ENCODE measurements at regions of chr14 and their contacts with region 1.

Region 1: DNA sequence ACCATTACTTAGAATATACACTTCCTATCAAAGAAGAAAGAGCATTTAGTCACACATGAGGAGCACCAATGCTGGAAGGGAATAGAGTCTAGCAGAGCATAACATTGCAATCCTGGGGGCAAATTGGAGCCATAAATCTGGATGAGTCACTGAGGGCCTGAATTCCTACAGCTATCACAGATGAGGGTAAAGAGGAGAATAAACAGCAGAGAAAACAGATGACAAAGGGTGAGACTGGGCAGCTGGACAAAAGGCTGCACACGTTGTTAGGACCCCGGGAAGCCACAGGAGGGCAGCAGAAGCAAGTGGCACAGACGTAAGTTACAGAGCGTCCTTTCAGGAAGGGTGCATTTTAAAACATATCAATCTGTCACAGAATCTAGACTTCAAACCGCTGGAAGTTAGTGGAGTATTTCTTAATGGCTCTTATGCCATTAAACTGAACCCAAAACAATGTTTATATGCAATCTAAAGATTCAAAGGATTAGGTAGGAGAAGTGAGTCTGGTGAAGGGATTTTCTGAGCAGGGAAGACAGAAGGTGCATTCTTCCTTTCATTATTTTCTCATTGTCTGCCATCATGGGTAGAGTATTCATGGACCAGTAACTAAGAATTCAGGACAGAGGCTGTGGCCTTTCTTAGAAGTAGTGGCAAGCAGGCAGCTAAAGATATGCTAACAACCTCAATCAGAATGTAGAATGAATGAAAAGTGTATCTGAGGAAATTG is 159.8 kb upstream of the DAAM1 start:
- DNase-seq: peak; percentile 38 to 64
- ATAC-seq: peak; percentile 68 to 89 (median 76)
- H3K4me3 ChIP-seq: no peak overlapping the region
- H3K27ac ChIP-seq: no peak overlapping the region
- H3K4me1 ChIP-seq: no peaks in the 10 kb centered on the region
- H3K27me3 ChIP-seq: no peaks in the 10 kb centered on the region
- CTCF ChIP-seq: peak; percentile 76

Region 2: DNA sequence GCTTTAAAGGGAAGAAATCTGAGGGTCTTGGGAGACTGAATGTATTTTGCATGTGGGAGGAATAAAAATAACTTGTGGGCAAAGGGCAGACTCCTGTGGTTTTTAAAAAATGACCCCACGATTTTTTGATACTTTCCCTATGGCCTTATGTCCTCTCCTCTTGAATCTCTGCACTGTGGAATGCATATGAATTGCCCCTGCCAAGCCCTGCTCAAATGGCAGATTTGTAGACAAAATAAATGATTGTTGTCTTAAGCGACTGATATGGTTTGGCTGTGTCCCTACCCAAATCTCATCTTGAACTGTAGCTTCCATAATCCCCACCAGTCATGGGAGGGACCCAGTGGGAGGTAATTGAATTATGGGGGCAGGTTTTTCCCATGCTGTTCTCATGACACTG is 167.1 kb before region 1 on chr14:
- intact Hi-C with region 1: no loop called
- DNase-seq: no peak
- ATAC-seq: no peak
- H3K4me3 ChIP-seq: no peak overlapping the region
- H3K27ac ChIP-seq: no peak overlapping the region
- H3K4me1 ChIP-seq: no peaks in the 10 kb centered on the region
- H3K27me3 ChIP-seq: no peaks in the 10 kb centered on the region
- CTCF ChIP-seq: no peak

Region 3: GRCh38 chr14:59126710-59127432 is 98.2 kb after region 1 on chr14:
- intact Hi-C with region 1: loop called (anchors 1 to 5 kb)
- DNase-seq: no peak
- ATAC-seq: peak; percentile 71 to 93 (median 86)
- H3K4me3 ChIP-seq: no peak overlapping the region
- H3K27ac ChIP-seq: no peak overlapping the region
- H3K4me1 ChIP-seq: no peaks in the 10 kb centered on the region
- H3K27me3 ChIP-seq: no peaks in the 10 kb centered on the region
- CTCF ChIP-seq: peak; percentile 85

Region 4: GRCh38 chr14:59438195-59438647 is 409.6 kb after region 1 on chr14:
- intact Hi-C with region 1: loop called in 1 of 2 experiments (anchors 10 kb)
- DNase-seq: no peak
- ATAC-seq: no peak
- H3K4me3 ChIP-seq: no peak overlapping the region
- H3K27ac ChIP-seq: no peak overlapping the region
- H3K4me1 ChIP-seq: peaks cover 11% of the 10 kb centered on the region
- H3K27me3 ChIP-seq: no peaks in the 10 kb centered on the region
- CTCF ChIP-seq: no peak

Region 5: DNA sequence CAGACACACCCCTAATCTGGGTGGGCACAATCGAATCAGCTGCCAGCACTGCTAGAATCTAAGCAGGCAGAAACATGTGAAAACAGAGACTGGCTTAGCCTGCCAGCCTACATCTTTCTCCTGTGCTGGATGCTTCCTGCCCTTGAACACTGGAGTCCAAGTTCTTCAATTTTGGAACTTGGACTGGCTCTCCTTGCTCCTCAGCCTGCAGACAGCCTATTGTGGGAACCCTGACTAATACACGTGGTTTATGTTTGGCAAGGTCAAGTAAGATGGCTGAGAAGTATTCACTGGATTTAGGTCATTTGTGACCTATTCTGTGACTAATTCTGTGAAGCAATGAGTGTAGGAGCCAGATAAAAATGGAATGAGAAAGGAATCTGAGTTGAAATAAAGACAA is 425.5 kb after region 1 on chr14:
- intact Hi-C with region 1: loop called in 1 of 2 experiments (anchors 10 kb)
- DNase-seq: no peak
- ATAC-seq: peak; percentile 59 to 93 (median 79)
- H3K4me3 ChIP-seq: no peak overlapping the region
- H3K27ac ChIP-seq: no peak overlapping the region
- H3K4me1 ChIP-seq: no peaks in the 10 kb centered on the region
- H3K27me3 ChIP-seq: no peaks in the 10 kb centered on the region
- CTCF ChIP-seq: no peak